ENCODE measurements at regions of chr14 and their contacts with region 1.

Region 1: GRCh38 chr14:91060351-91061055 is at the start of gene RPS6KA5:
- DNase-seq: peak; percentile 100
- H3K4me3 Mint-ChIP-seq: peak within 1 kb of the TSS; percentile 86
- H3K27ac Mint-ChIP-seq: peak within 1 kb of the TSS; percentile 73
- H3K4me1 Mint-ChIP-seq: peaks cover 62% of the 10 kb centered on the region
- H3K27me3 Mint-ChIP-seq: no peaks in the 10 kb centered on the region
- total RNA-seq, gene RPS6KA5: 44.5 to 49.9 TPM

Region 2: GRCh38 chr14:90903101-90903500 is 157.4 kb before region 1 on chr14:
- CTCF ChIA-PET with region 1: interaction called, 14 read pairs
- POLR2A ChIA-PET with region 1: interaction called, 4 read pairs
- DNase-seq: peak; percentile 66
- H3K4me3 Mint-ChIP-seq: no peak overlapping the region
- H3K27ac Mint-ChIP-seq: peak overlapping the region; percentile 21
- H3K4me1 Mint-ChIP-seq: peaks cover 30% of the 10 kb centered on the region
- H3K27me3 Mint-ChIP-seq: no peaks in the 10 kb centered on the region

Region 3: GRCh38 chr14:90970167-90970600 is 90.3 kb before region 1 on chr14:
- CTCF ChIA-PET with region 1: interaction called, 3 read pairs
- POLR2A ChIA-PET with region 1: interaction called, 10 read pairs
- DNase-seq: no peak
- H3K4me3 Mint-ChIP-seq: peak overlapping the region; percentile 51
- H3K27ac Mint-ChIP-seq: peak overlapping the region; percentile 82
- H3K4me1 Mint-ChIP-seq: peaks cover 45% of the 10 kb centered on the region
- H3K27me3 Mint-ChIP-seq: no peaks in the 10 kb centered on the region

Region 4: DNA sequence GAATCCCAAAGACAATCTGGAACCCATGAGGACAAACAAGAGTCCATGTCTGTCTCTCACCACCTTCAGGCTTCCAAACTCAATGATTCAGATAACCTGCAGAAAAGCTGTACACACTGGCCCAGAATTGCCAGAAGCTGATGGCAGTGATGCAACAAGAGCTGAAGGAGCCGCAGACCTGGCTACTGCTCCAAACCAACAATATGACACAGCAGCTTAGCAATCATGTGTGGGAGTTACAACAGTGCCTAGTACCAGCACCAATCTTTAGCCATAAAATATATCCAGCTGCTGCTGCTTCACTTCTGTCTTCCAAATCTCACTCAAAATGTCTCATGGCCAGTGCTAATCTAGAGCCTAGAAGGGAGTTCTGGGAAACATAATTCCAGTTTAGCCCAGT is 22.1 kb before region 1 on chr14:
- CTCF ChIA-PET with region 1: interaction called, 9 read pairs
- POLR2A ChIA-PET with region 1: interaction called, 24 read pairs
- DNase-seq: no peak
- H3K4me3 Mint-ChIP-seq: no peak overlapping the region
- H3K27ac Mint-ChIP-seq: no peak overlapping the region
- H3K4me1 Mint-ChIP-seq: peaks cover 70% of the 10 kb centered on the region
- H3K27me3 Mint-ChIP-seq: no peaks in the 10 kb centered on the region

Region 5: DNA sequence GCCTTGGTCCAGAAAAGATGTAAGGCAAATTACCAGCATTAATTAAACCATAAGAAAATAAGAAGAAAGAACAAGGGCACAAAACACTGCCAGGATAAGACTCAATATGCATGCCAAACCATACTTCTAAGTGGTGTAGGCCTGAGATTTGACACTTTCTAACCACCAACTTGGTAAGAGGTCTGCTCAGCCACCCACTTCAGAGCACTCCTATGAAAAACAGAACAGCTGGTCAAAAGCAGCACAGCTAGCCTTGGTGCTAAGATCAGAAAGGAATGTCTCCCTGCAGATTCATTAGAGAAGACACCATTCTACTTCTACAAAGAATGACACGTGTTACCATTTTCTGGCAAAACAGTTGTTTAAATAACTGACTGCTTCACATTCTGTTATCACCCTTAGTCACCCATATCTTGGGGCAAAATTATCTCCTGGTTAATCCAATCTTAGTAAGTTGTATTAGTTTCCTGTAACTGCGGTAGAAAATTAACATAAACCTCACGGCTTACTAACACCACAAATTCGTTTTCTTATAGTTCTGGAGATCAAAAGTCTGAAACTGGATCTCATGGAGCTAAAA is 13.2 kb before region 1 on chr14:
- CTCF ChIA-PET with region 1: interaction called, 5 read pairs
- POLR2A ChIA-PET with region 1: interaction called, 40 read pairs
- DNase-seq: no peak
- H3K4me3 Mint-ChIP-seq: no peak overlapping the region
- H3K27ac Mint-ChIP-seq: peak overlapping the region; percentile 16
- H3K4me1 Mint-ChIP-seq: peaks cover 52% of the 10 kb centered on the region
- H3K27me3 Mint-ChIP-seq: no peaks in the 10 kb centered on the region

Region 6: DNA sequence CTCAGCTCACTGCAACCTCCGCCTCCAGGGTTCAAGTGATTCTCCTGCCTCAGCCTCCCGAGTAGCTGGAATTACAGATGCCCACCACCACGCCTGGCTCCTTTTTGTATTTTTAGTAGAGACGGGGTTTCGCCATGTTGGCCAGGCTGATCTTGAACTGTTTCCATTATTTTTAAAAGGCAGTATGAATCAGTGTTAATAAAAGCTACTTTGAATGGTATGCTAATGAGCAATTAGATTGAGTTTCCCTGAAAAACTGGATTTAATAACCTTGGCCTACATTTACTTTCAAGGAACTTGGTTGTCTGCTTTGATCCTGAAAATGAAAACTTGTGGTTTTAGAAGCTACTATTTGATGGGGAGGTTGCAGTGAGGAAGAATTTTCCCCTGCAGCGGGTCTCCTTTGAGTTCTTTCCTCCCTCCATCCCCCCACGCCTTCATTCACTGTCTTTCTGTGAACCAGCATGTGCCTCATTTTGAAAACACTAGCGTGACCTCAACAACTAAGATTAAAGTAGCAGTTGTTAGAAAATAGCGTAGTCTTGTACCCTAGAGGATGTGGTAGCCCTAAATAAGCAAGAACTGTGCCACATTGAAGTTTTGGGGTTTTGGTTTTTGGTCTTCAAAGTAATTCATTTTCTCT is 17.7 kb after region 1 on chr14:
- CTCF ChIA-PET with region 1: interaction called, 15 read pairs
- POLR2A ChIA-PET with region 1: interaction called, 154 read pairs
- DNase-seq: peak; percentile 64
- H3K4me3 Mint-ChIP-seq: peak overlapping the region; percentile 40
- H3K27ac Mint-ChIP-seq: peak overlapping the region; percentile 95
- H3K4me1 Mint-ChIP-seq: peaks cover 61% of the 10 kb centered on the region
- H3K27me3 Mint-ChIP-seq: no peaks in the 10 kb centered on the region

Region 7: DNA sequence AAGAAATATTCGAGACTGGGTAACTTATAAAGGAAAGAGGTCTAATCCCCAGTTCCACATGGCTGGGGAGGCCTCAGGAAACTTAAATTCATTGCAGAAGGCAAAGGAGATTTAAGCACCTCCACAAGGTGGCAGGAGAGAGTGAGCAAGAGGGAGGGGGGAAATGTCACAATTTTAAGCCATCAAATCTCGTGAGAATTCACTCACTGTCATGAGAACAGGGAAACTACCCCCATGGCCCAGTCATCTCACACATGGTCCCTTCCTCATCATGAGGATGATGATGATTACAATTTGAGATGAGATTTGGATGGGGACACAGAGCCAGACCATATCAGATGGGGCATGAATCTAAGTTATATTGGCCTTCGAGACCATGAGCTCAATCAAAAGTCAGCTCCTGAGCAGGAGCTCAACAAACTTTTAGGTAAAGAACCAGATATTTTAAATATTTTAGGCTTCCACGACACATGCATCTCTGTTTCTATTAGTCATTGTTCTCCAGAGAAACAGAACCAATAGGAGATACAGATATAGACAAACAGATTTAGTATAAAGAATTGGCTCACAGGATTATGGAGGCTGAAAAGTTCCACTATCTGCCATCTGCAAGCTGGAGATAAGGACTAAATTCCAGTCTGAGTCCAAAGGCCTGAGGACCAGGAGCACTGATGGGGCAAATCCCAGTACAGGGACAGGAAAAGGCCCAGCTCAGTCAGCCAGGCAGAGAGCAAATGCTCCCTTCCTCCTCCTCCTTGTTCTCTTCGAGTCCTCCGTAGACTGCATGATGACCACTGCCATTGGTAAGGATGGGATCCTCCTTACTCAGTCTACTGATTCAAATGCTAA is 78.2 kb after region 1 on chr14:
- CTCF ChIA-PET with region 1: interaction called, 15 read pairs
- POLR2A ChIA-PET with region 1: interaction called, 8 read pairs
- DNase-seq: peak; percentile 59
- H3K4me3 Mint-ChIP-seq: no peak overlapping the region
- H3K27ac Mint-ChIP-seq: peak overlapping the region; percentile 41
- H3K4me1 Mint-ChIP-seq: peaks cover 59% of the 10 kb centered on the region
- H3K27me3 Mint-ChIP-seq: no peaks in the 10 kb centered on the region

Measured in activated CD4-positive, alpha-beta memory T cell treated with anti-CD3 and anti-CD28 coated beads, Interleukin-2, amount 10 ng/mL, durations not matched to agents 7 days and 5 days (primary cell).